Endothelial cell of umbilical vein (primary cell): ENCODE measurements at regions of chr7 and their contacts with region 1.

Region 1: DNA sequence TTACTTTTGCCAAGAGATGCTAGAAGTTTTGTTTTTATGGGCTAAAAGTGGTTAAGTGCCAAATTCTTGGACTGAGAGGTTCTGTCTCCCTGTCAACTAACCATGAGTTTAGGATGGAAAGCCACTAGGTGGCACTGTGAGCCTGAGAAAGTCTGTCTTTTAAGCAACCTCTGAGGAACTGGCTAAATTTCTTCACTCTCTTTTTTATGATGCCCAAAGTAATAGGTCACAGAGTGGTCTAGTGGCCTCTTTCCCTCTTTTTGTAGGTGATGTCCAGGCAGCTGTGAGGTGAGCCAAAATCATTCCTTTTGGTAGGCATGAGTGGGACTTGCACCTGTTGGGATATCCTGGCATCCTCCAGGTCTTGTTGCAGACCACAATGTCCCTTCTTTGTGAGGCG is 56.8 kb downstream of the SND1 start:
- DNase-seq: peak; percentile 81
- H3K4me3 ChIP-seq: no peak overlapping the region
- H3K27ac ChIP-seq: no peak overlapping the region
- H3K4me1 ChIP-seq: peaks cover 5% of the 10 kb centered on the region
- H3K27me3 ChIP-seq: no peaks in the 10 kb centered on the region
- CTCF ChIP-seq: peak; percentile 62 to 63
- POLR2A ChIP-seq: no peak

Region 2: GRCh38 chr7:127667017-127667670 is 41.6 kb before region 1 on chr7:
- CTCF ChIA-PET with region 1: interaction called, 10 read pairs
- POLR2A ChIA-PET with region 1: no interaction called
- dilution Hi-C with region 1: no loop called
- intact Hi-C with region 1: no loop called
- DNase-seq: peak; percentile 61
- H3K4me3 ChIP-seq: peak overlapping the region in 1 of 3 experiments; percentile 1
- H3K27ac ChIP-seq: peak overlapping the region; percentile 93
- H3K4me1 ChIP-seq: peaks cover 37% of the 10 kb centered on the region
- H3K27me3 ChIP-seq: no peaks in the 10 kb centered on the region
- CTCF ChIP-seq: no peak
- POLR2A ChIP-seq: no peak

Region 3: DNA sequence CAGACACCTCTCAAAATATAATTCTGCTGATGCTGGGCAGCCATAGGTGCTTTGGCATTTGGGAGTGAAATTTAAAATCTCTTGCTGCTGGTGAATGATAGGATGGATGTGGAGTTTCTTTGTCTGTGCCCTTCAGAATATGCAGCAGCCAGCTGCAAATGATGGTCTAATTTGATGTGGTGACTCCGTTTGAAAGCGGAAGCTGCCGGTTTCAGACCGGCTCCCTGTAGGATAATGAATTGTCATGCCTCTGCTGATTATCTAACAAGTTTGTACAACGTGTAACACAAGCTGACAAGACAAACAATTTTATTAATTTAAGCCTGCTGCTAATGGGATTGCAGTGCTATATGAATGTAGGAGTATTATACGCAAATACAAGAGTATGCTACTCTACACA is 46.7 kb after region 1 on chr7:
- CTCF ChIA-PET with region 1: no interaction called
- POLR2A ChIA-PET with region 1: no interaction called
- dilution Hi-C with region 1: no loop called
- intact Hi-C with region 1: no loop called
- DNase-seq: no peak
- H3K4me3 ChIP-seq: no peak overlapping the region
- H3K27ac ChIP-seq: no peak overlapping the region
- H3K4me1 ChIP-seq: no peaks in the 10 kb centered on the region
- H3K27me3 ChIP-seq: no peaks in the 10 kb centered on the region
- CTCF ChIP-seq: no peak
- POLR2A ChIP-seq: no peak

Region 4: DNA sequence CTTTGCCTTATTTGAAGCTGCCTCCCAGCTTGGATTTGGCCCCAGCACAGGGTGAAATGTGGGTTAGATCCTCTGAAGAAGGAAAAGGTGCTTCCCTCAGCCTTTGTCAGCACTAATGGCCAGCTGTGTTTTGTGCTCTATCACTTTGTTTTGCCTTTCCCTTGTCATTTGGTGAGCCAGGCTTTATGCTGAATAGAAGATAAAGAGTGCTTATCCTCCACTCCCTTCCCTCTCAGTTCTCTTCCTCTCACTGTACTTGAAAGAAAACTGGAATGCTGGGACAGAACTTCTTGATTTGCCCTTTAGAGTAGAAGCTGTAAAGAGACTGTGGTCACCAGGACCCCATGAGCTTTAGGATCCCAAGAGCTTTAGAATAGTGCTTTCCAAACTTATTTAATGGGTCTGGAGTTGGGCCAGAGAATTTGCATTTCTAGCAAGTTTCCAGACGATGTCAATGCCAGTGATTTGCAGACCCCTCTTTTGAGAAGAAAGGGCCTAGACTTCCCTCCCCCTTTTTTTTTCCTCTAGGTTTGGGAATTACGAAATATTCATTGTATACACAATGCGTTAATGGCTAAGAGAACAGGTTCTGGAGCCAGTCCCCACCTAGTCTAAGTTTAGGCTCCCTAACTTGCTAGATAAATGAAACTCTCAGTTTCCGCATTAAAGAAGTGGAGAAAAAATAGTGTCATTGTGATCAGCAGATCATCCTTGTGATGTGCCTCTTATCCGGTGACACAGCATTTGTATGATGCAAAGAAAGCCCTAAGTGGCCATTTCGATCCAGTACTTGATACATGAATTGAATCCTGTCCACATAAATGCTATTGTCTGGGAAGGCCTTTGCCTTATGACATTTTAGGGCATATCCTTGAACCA is 241.2 kb after region 1 on chr7:
- CTCF ChIA-PET with region 1: interaction called, 4 read pairs
- POLR2A ChIA-PET with region 1: no interaction called
- dilution Hi-C with region 1: no loop called
- intact Hi-C with region 1: loop called (anchors 5 kb)
- DNase-seq: no peak
- H3K4me3 ChIP-seq: no peak overlapping the region
- H3K27ac ChIP-seq: no peak overlapping the region
- H3K4me1 ChIP-seq: peaks cover 29% of the 10 kb centered on the region
- H3K27me3 ChIP-seq: no peaks in the 10 kb centered on the region
- CTCF ChIP-seq: no peak
- POLR2A ChIP-seq: no peak

Region 5: GRCh38 chr7:128031901-128032604 is 323.3 kb after region 1 on chr7:
- CTCF ChIA-PET with region 1: interaction called, 13 read pairs
- POLR2A ChIA-PET with region 1: no interaction called
- dilution Hi-C with region 1: no loop called
- intact Hi-C with region 1: loop called (anchors 1 kb)
- DNase-seq: peak; percentile 85
- H3K4me3 ChIP-seq: peak overlapping the region in 2 of 3 experiments; percentile 8 to 45
- H3K27ac ChIP-seq: no peak overlapping the region
- H3K4me1 ChIP-seq: peaks cover 6% of the 10 kb centered on the region
- H3K27me3 ChIP-seq: no peaks in the 10 kb centered on the region
- CTCF ChIP-seq: peak; percentile 16 to 37
- POLR2A ChIP-seq: no peak

Region 6: DNA sequence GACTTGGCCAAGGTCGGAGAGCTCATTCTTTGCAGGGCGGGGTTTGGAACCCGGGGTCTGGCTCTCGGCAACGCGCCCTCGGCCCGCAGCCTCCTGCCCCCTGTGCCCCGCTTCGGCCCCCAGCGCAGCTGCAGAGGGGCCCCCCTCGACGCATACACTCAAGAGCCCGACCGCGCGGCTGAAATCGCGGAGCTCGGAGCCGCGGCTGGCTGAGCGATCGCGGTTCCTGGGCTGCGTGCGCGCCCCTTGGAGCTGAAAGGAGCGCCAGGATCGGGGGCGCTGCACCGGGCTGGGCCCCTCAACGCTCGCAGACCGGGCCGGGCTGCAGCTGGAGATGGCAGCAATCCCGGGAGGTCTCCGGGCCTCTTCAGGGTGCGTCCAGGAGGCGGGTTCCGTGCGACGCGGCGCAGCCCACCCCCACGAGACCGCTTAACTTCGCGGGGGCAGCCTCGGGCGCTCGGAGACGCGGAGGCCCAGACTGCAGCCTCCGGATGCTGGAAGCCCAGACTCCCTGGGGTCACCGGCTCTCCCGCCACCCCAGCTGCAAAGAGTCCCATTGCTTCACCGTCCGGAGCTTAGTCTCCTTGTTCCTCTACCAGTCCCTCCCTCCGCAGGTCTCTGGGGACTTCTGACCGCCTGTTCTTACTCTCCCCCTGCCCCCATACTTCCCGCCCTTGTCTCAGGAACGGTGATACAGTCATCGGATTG is 395.4 kb after region 1 on chr7:
- CTCF ChIA-PET with region 1: interaction called, 17 read pairs
- POLR2A ChIA-PET with region 1: no interaction called
- dilution Hi-C with region 1: no loop called
- intact Hi-C with region 1: no loop called
- DNase-seq: no peak
- H3K4me3 ChIP-seq: peak overlapping the region in 1 of 3 experiments; percentile 18
- H3K27ac ChIP-seq: no peak overlapping the region
- H3K4me1 ChIP-seq: peaks cover 6% of the 10 kb centered on the region
- H3K27me3 ChIP-seq: peaks cover 10 to 25% of the 10 kb centered on the region in 2 experiments
- CTCF ChIP-seq: no peak
- POLR2A ChIP-seq: no peak

Region 7: GRCh38 chr7:128135515-128136214 is 426.9 kb after region 1 on chr7:
- CTCF ChIA-PET with region 1: interaction called, 10 read pairs
- POLR2A ChIA-PET with region 1: no interaction called
- dilution Hi-C with region 1: no loop called
- intact Hi-C with region 1: loop called (anchors 10 kb)
- DNase-seq: peak; percentile 64
- H3K4me3 ChIP-seq: peak overlapping the region; percentile 34 to 62 (median 58)
- H3K27ac ChIP-seq: no peak overlapping the region
- H3K4me1 ChIP-seq: peaks cover 37% of the 10 kb centered on the region
- H3K27me3 ChIP-seq: peaks cover 17 to 34% of the 10 kb centered on the region in 2 experiments
- CTCF ChIP-seq: peak; percentile 75 to 93
- POLR2A ChIP-seq: no peak

Region 8: GRCh38 chr7:128322040-128322643 is 613.4 kb after region 1 on chr7:
- CTCF ChIA-PET with region 1: interaction called, 3 read pairs
- POLR2A ChIA-PET with region 1: no interaction called
- dilution Hi-C with region 1: no loop called
- intact Hi-C with region 1: loop called (anchors 10 kb)
- DNase-seq: peak; percentile 47
- H3K4me3 ChIP-seq: no peak overlapping the region
- H3K27ac ChIP-seq: no peak overlapping the region
- H3K4me1 ChIP-seq: no peaks in the 10 kb centered on the region
- H3K27me3 ChIP-seq: no peaks in the 10 kb centered on the region
- CTCF ChIP-seq: peak; percentile 8 to 38
- POLR2A ChIP-seq: no peak